ENCODE measurements at regions of chr7 and their contacts with region 1.

Region 1: DNA sequence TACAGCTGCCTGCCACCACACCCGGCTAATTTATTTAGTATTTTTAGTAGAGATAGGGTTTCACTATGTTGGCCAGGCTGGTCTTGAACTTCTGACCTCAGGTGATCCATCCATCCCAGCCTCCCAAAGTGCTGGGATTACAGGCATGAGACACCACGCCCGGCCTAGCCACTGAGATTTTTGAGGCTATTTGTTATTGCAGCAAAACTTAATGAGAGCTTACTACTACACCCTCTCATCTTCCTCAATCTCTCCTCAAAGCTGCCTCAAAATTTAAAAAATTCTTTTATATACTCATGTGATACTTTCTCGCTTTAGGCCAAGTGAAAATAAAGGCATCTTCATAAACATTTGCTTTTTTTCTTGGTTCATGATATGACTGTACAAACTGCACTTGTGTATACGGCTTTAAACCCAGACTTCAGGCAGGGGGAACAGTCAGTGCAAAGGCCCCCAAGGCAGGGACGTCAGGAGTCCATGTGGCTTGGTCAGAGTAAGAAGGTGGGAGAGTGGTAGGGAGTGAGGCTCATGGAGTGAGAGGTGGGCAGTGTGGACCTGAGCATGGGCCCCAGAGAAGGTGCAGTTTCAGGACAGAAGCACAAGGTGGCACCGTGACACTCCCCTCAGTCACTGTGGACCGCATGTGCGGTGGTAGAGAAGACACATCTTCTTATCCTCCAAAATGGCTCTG is 55.5 kb downstream of the SYPL1 start:
- DNase-seq: peak; percentile 65 to 82
- ATAC-seq: peak; percentile 96 to 99 (median 97)
- H3K4me3 ChIP-seq: no peak overlapping the region
- H3K27ac ChIP-seq: no peak overlapping the region
- H3K4me1 ChIP-seq: peaks cover 5% of the 10 kb centered on the region
- H3K27me3 ChIP-seq: no peaks in the 10 kb centered on the region
- CTCF ChIP-seq: peak; percentile 91

Region 2: DNA sequence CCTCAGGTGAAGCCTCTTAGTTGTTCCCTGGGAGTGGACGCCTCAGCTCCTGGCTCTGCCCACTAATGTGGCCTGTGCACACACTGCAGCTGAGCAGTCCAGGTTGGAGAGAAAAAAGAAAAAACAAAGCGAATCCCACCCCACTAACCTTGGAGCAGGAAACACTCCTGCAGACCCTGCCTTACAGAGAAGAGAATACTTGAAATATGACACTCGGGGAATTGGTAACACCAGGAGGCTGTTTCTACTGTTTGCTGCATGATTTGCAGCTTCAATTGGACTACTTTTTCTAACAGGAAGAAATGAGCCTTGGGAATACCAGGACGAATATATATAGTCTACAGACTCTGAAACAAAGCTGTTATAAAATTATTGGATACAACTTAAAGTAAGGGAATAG is 71.4 kb before region 1 on chr7:
- intact Hi-C with region 1: no loop called
- DNase-seq: no peak
- ATAC-seq: no peak
- H3K4me3 ChIP-seq: no peak overlapping the region
- H3K27ac ChIP-seq: no peak overlapping the region
- H3K4me1 ChIP-seq: no peaks in the 10 kb centered on the region
- H3K27me3 ChIP-seq: no peaks in the 10 kb centered on the region
- CTCF ChIP-seq: no peak

Region 3: DNA sequence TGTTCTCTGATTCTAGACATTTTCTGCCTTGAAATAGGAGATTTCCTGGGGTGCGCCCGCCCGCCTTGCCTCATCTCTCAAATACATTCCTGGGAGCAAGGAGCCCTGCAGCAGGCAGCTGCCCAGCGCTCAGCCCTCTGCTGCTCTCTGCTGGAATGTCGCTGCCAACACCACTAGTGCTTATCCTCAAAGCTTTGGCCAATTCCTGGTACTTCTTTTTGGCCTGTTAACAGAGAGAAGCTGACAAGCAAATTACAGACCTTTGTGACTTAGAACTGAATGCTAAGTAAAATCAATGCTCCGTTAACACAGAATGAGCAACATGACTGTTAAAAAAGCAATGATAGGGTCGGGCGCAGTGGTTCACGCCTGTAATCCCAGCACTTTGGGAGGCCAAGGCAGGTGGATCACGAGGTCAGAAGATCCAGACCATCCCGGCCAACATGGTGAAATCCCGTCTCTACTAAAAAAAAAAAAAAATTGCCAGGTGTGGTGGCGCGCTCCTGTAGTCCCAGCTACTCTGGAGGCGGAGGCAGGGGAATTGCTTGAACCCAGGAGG is 97.3 kb after region 1 on chr7:
- intact Hi-C with region 1: loop called (anchors 1 kb)
- DNase-seq: peak; percentile 79 to 91
- ATAC-seq: peak; percentile 96 to 100 (median 98)
- H3K4me3 ChIP-seq: peak overlapping the region; percentile 34
- H3K27ac ChIP-seq: no peak overlapping the region
- H3K4me1 ChIP-seq: peaks cover 10% of the 10 kb centered on the region
- H3K27me3 ChIP-seq: no peaks in the 10 kb centered on the region
- CTCF ChIP-seq: peak; percentile 96

Region 4: GRCh38 chr7:106178593-106179134 is 122.0 kb after region 1 on chr7:
- intact Hi-C with region 1: no loop called
- DNase-seq: no peak
- ATAC-seq: peak; percentile 50 to 73 (median 58)
- H3K4me3 ChIP-seq: no peak overlapping the region
- H3K27ac ChIP-seq: peak overlapping the region; percentile 78
- H3K4me1 ChIP-seq: peaks cover 28% of the 10 kb centered on the region
- H3K27me3 ChIP-seq: no peaks in the 10 kb centered on the region
- CTCF ChIP-seq: peak; percentile 27

Region 5: GRCh38 chr7:106461993-106462859 is 405.6 kb after region 1 on chr7:
- intact Hi-C with region 1: loop called in 1 of 2 experiments (anchors 10 kb)
- DNase-seq: no peak
- ATAC-seq: peak in 3 of 4 donors; percentile 43 to 75 (median 49)
- H3K4me3 ChIP-seq: no peak overlapping the region
- H3K27ac ChIP-seq: no peak overlapping the region
- H3K4me1 ChIP-seq: peaks cover 9% of the 10 kb centered on the region
- H3K27me3 ChIP-seq: no peaks in the 10 kb centered on the region
- CTCF ChIP-seq: peak; percentile 67